RWPE1 (cell line): ENCODE measurements at regions of chr10 and their contacts with region 1.

Region 1: GRCh38 chr10:90288391-90288933 is 569.4 kb downstream of the HTR7 start:
- DNase-seq: peak; percentile 12
- H3K27ac ChIP-seq: no peak overlapping the region
- CTCF ChIP-seq: no peak

Region 2: GRCh38 chr10:90592638-90593302 is 304.3 kb after region 1 on chr10:
- CTCF ChIA-PET with region 1: interaction called, 13 read pairs
- POLR2A ChIA-PET with region 1: no interaction called
- DNase-seq: peak; percentile 85
- H3K27ac ChIP-seq: no peak overlapping the region
- CTCF ChIP-seq: peak; percentile 51